MCF 10A (cell line): ENCODE measurements at regions of chr14 and their contacts with region 1.

Region 1: DNA sequence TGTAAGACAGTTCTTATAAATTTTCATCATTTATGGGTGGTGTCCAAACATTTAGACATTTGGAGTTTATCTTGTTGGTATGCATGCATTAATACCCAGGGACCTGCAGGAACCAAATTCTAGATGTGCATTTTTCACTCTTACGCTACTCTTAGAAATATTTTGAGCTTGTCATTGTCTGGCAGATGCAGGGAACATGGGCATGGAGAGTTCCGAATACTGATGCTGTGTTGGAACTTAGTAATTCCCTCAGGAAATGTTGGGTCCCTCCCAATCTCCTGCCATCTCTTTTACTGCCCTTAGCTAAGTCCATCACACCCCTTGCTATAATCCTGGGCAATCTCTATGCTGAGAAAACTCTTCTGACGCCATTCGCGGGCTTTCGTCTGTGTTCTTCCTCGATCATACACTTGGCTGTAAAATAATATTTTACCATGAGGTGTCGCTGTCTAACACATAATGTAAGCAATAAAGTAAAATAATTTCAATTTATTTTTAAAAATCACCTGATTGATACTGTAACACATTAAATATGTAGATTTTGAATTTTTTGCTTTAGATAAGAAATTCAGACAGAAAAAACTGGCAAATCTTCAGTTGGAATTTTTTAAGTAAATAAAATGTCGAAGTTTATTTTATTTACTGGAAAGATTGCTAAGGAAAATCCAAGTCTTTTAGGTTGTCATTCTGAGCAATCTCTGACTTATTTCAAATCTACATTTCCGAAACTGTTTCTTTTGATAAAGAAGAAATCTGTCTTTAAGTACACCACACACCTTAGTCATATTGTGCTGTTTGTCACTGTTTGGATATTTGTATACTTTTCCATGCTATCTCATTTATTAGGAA is 304.1 kb upstream of the SSTR1 start:
- DNase-seq: peak; percentile 55
- H3K4me3 Mint-ChIP-seq: no peak overlapping the region
- H3K27ac Mint-ChIP-seq: no peak overlapping the region
- H3K4me1 Mint-ChIP-seq: peaks cover 6% of the 10 kb centered on the region
- H3K27me3 Mint-ChIP-seq: no peaks in the 10 kb centered on the region
- CTCF ChIP-seq: peak; percentile 70

Region 2: DNA sequence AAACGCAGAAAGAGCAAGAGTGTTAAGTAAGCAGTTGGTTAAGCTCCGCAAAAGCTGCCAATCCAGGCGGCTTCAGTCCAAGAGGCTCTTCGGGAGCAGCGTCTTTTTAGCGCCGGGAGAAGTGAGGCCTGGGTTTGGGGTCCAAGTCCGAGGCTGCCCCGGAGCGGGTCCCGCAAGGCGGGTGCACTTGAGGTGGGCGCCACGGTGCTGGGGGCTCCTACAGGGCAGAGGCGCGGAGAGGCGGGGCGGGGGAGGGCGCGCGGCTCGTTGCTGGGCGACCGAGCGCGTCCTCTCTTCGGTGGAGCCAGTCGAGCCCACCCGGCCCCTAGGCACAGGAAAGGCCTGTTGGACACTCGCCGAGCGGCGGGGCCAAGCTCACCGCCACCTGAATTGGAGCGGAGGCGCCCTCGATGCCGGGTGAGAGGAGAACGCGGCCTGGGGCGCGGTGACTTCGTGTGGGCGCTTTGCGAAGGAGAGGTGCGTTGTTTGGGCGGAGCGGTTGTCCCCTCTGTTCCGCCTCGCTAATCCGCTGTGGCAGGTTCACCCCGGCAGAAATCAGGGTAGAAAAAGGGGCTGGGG is 292.5 kb before region 1 on chr14:
- CTCF ChIA-PET with region 1: no interaction called
- POLR2A ChIA-PET with region 1: no interaction called
- intact Hi-C with region 1: no loop called
- DNase-seq: no peak
- H3K4me3 Mint-ChIP-seq: no peak overlapping the region
- H3K27ac Mint-ChIP-seq: no peak overlapping the region
- H3K4me1 Mint-ChIP-seq: no peaks in the 10 kb centered on the region
- H3K27me3 Mint-ChIP-seq: no peaks in the 10 kb centered on the region
- CTCF ChIP-seq: no peak

Region 3: GRCh38 chr14:37916302-37916701 is 12.7 kb after region 1 on chr14:
- CTCF ChIA-PET with region 1: interaction called, 11 read pairs
- POLR2A ChIA-PET with region 1: no interaction called
- intact Hi-C with region 1: no loop called
- DNase-seq: no peak
- H3K4me3 Mint-ChIP-seq: no peak overlapping the region
- H3K27ac Mint-ChIP-seq: no peak overlapping the region
- H3K4me1 Mint-ChIP-seq: no peaks in the 10 kb centered on the region
- H3K27me3 Mint-ChIP-seq: no peaks in the 10 kb centered on the region
- CTCF ChIP-seq: no peak

Region 4: DNA sequence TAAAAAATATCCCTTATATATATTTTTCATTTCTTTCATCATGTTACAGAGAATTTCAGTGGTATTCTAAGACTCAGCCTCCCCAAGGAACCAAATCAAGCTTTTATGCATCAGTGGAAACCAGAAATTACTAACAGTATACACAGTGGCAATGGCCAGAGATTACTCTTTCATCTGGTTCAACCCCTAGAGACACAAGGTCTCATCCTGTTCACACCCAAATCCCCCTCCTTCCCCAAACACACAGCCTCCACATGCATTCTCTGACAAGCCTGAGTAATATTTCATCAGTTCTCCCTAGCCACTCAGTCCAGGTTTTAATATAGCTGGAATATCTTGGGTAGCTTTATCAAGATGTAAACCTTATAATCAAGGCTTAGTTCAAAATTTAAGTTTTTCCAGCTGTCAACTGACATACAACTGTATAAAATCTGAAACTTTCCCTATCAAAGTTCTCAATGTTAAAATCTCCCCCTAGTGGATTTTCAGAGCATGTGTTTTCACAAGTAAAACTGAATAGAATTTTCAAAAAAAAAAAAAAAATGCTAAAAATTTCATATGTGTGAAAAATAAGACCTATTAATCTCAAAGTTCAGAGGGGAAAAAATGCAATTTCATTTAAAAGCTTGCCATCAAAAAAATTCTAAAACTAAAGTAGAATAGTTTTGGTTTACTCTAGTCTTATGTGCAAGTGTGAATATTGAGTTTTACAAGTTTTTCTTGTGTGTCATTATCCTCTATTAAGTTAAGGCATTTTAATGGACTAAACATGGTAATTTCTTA is 293.6 kb after region 1 on chr14:
- CTCF ChIA-PET with region 1: interaction called, 50 read pairs
- POLR2A ChIA-PET with region 1: interaction called, 3 read pairs
- intact Hi-C with region 1: loop called (anchors 1 kb)
- DNase-seq: peak; percentile 3
- H3K4me3 Mint-ChIP-seq: no peak overlapping the region
- H3K27ac Mint-ChIP-seq: peak overlapping the region; percentile 63
- H3K4me1 Mint-ChIP-seq: peaks cover 29% of the 10 kb centered on the region
- H3K27me3 Mint-ChIP-seq: no peaks in the 10 kb centered on the region
- CTCF ChIP-seq: peak; percentile 52

Region 5: DNA sequence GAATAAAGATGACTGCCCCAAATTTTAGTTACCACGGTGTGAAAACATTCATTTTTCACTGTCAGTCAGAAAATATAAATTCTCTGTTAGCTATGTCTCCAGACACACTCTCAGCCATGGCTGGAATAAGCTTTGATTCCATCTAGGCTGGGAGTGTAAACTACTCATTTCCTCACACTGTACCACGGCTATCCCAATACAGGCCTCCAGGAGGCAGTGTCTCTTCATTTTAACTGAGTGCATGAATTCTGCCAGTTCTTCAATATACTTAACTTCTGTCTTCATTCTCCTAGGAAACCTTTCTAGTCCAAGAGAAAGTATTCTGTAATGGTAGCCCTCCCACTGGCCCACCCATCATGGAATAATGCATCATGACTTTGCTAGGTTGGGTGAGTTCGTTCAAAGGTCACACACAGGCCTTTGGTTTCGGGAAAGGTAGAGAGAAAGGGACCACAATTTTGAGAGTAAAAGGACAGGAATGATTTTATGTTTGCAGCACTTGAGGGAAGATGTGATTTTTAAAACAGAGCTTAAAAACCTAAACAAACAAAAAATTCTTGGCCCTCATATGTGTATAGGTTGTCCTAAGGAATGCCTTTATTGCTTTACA is 818.4 kb after region 1 on chr14:
- CTCF ChIA-PET with region 1: interaction called, 9 read pairs
- POLR2A ChIA-PET with region 1: interaction called, 3 read pairs
- intact Hi-C with region 1: loop called (anchors 5 kb)
- DNase-seq: peak; percentile 72
- H3K4me3 Mint-ChIP-seq: no peak overlapping the region
- H3K27ac Mint-ChIP-seq: no peak overlapping the region
- H3K4me1 Mint-ChIP-seq: peaks cover 8% of the 10 kb centered on the region
- H3K27me3 Mint-ChIP-seq: no peaks in the 10 kb centered on the region
- CTCF ChIP-seq: peak; percentile 63

Region 6: GRCh38 chr14:39015360-39015961 is 1111.9 kb after region 1 on chr14:
- CTCF ChIA-PET with region 1: interaction called, 32 read pairs
- POLR2A ChIA-PET with region 1: no interaction called
- intact Hi-C with region 1: loop called (anchors 1 kb)
- DNase-seq: peak; percentile 66
- H3K4me3 Mint-ChIP-seq: no peak overlapping the region
- H3K27ac Mint-ChIP-seq: no peak overlapping the region
- H3K4me1 Mint-ChIP-seq: peaks cover 12% of the 10 kb centered on the region
- H3K27me3 Mint-ChIP-seq: no peaks in the 10 kb centered on the region
- CTCF ChIP-seq: peak; percentile 66